ENCODE measurements at regions of chr6 and their contacts with region 1.

Region 1: DNA sequence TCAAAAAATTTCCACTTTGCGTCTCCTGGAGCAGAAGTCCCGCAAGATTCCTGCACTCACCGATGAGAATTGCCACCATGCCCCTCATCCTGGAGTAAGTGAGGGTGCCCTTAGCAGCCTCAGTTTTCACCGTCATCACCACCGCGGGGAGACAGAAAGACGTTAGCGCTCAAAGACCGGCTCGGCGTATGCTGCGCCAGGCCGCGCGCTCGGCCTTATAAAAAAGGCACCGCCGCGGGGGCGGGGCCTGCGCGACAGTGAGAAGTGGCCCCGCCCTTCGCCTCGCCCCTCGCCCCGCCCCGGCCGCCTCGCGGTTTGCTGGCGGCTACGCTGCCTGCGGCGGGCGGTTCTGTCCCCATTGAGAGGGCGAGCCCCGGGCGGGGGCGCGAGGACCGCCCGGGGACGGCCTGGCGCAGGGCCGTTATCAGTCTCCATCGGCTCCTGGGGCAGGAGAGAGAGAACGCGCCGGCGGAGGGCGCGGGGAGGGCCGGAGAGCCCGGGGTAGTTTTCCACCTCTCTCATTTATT is 122.3 kb upstream of the SLC2A12 start:
- DNase-seq: peak; percentile 87 to 97 (median 93)
- ATAC-seq: peak; percentile 89
- H3K4me3 ChIP-seq: peak overlapping the region; percentile 71
- H3K4me3 Mint-ChIP-seq: peak overlapping the region; percentile 86 to 100 (median 98)
- H3K27ac ChIP-seq: peak overlapping the region; percentile 88
- H3K27ac Mint-ChIP-seq: peak overlapping the region; percentile 89 to 99 (median 97)
- H3K4me1 ChIP-seq: peaks cover 11 to 52% of the 10 kb centered on the region in 2 donors
- H3K4me1 Mint-ChIP-seq: peaks cover 48 to 78% (median 75%) of the 10 kb centered on the region in 7 donors
- H3K27me3 ChIP-seq: no peaks in the 10 kb centered on the region
- H3K27me3 Mint-ChIP-seq: no peaks in the 10 kb centered on the region

Region 2: GRCh38 chr6:134123666-134124208 is 51.0 kb before region 1 on chr6:
- CTCF ChIA-PET with region 1: no interaction called
- POLR2A ChIA-PET with region 1: no interaction called
- intact Hi-C with region 1: loop called in 1 of 2 experiments (anchors 1 kb)
- DNase-seq: peak in 7 of 9 donors; percentile 7 to 75 (median 50)
- ATAC-seq: peak; percentile 99
- H3K4me3 ChIP-seq: no peak overlapping the region
- H3K4me3 Mint-ChIP-seq: peak overlapping the region in 4 of 10 donors; percentile 39 to 53 (median 51)
- H3K27ac ChIP-seq: no peak overlapping the region
- H3K27ac Mint-ChIP-seq: peak overlapping the region in 4 of 9 donors; percentile 22 to 70 (median 68)
- H3K4me1 ChIP-seq: no peaks in the 10 kb centered on the region
- H3K4me1 Mint-ChIP-seq: peaks cover 0 to 4% (median 0%) of the 10 kb centered on the region in 7 donors
- H3K27me3 ChIP-seq: no peaks in the 10 kb centered on the region
- H3K27me3 Mint-ChIP-seq: peaks cover 0 to 4% (median 0%) of the 10 kb centered on the region in 5 donors

Region 3: GRCh38 chr6:134185277-134185676 is 10.5 kb after region 1 on chr6:
- CTCF ChIA-PET with region 1: no interaction called
- POLR2A ChIA-PET with region 1: no interaction called
- intact Hi-C with region 1: no loop called
- DNase-seq: no peak
- ATAC-seq: no peak
- H3K4me3 ChIP-seq: no peak overlapping the region
- H3K4me3 Mint-ChIP-seq: no peak overlapping the region
- H3K27ac ChIP-seq: no peak overlapping the region
- H3K27ac Mint-ChIP-seq: peak overlapping the region in 1 of 9 donors; percentile 9
- H3K4me1 ChIP-seq: peaks cover 0 to 9% of the 10 kb centered on the region in 2 donors
- H3K4me1 Mint-ChIP-seq: peaks cover 0 to 32% (median 18%) of the 10 kb centered on the region in 7 donors
- H3K27me3 ChIP-seq: no peaks in the 10 kb centered on the region
- H3K27me3 Mint-ChIP-seq: no peaks in the 10 kb centered on the region

Region 4: GRCh38 chr6:134352786-134353480 is 178.2 kb after region 1 on chr6:
- CTCF ChIA-PET with region 1: interaction called, 13 read pairs
- POLR2A ChIA-PET with region 1: interaction called, 3 read pairs
- intact Hi-C with region 1: no loop called
- DNase-seq: no peak
- ATAC-seq: no peak
- H3K4me3 ChIP-seq: no peak overlapping the region
- H3K4me3 Mint-ChIP-seq: peak overlapping the region in 7 of 10 donors; percentile 13 to 93 (median 83)
- H3K27ac ChIP-seq: no peak overlapping the region
- H3K27ac Mint-ChIP-seq: peak overlapping the region; percentile 21 to 98 (median 96)
- H3K4me1 ChIP-seq: peaks cover 0 to 18% of the 10 kb centered on the region in 2 donors
- H3K4me1 Mint-ChIP-seq: peaks cover 8 to 34% (median 28%) of the 10 kb centered on the region in 7 donors
- H3K27me3 ChIP-seq: no peaks in the 10 kb centered on the region
- H3K27me3 Mint-ChIP-seq: no peaks in the 10 kb centered on the region

Region 5: GRCh38 chr6:134517145-134517658 is 342.5 kb after region 1 on chr6:
- CTCF ChIA-PET with region 1: no interaction called
- POLR2A ChIA-PET with region 1: interaction called, 3 read pairs
- intact Hi-C with region 1: loop called (anchors 1 kb)
- DNase-seq: peak in 1 of 9 donors; percentile 20
- ATAC-seq: no peak
- H3K4me3 ChIP-seq: no peak overlapping the region
- H3K4me3 Mint-ChIP-seq: peak overlapping the region in 2 of 10 donors; percentile 1 to 9
- H3K27ac ChIP-seq: no peak overlapping the region
- H3K27ac Mint-ChIP-seq: peak overlapping the region in 7 of 9 donors; percentile 3 to 95 (median 66)
- H3K4me1 ChIP-seq: peaks cover 0 to 24% of the 10 kb centered on the region in 2 donors
- H3K4me1 Mint-ChIP-seq: peaks cover 12 to 48% (median 34%) of the 10 kb centered on the region in 7 donors
- H3K27me3 ChIP-seq: no peaks in the 10 kb centered on the region
- H3K27me3 Mint-ChIP-seq: no peaks in the 10 kb centered on the region

Region 6: DNA sequence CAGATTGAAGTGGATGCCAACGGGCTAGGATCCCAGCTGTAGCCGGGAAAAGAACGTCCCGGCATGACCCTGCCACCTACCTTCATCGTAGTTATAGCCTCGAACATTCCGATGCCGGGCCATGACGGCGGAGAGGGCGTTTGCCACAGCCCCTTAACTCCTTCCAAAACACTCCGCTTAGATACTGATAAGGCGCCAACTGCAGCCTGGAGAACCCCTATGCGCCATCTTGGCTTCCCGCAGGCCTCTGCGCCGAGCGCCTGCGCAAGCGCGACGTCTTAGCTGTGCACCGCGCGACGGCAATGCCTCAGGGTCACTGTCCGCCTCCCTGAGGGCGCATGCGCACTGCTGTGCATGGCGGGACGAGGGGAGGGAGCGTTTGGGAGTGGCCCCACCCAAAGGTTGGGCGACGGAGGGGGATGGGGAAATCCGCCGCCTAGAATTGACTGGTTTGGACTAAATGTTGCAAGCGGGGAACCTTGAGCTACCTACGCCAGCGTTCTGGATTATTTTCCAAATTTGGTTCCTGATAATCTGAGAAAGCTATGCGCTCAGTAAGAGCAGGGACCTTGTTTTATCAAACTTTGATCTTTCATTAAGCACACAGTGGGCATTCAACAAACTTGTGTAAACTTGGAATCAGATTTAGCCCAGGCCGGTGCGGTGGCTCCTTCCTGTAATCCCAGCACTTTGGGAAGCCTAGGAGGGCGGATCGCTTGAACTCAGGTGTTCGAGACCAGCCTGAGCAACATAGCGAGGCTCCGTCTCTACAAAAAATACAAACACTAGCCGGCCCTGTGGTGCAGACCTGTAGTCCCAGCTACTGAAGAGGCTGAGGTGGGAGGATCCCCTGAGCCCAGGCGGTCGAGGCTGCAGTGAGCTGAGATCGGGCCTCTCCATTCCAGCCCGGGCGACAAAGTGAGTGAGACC is 880.1 kb after region 1 on chr6 and contains the start of gene HBS1L:
- CTCF ChIA-PET with region 1: no interaction called
- POLR2A ChIA-PET with region 1: no interaction called
- intact Hi-C with region 1: loop called (anchors 1 kb)
- DNase-seq: peak; percentile 93 to 98 (median 96)
- ATAC-seq: peak; percentile 97
- H3K4me3 ChIP-seq: peak within 1 kb of the TSS; percentile 96
- H3K4me3 Mint-ChIP-seq: peak within 1 kb of the TSS; percentile 89 to 100 (median 97)
- H3K27ac ChIP-seq: peak within 1 kb of the TSS; percentile 97
- H3K27ac Mint-ChIP-seq: peak within 1 kb of the TSS; percentile 97 to 100 (median 98)
- H3K4me1 ChIP-seq: peaks cover 10 to 13% of the 10 kb centered on the region in 2 donors
- H3K4me1 Mint-ChIP-seq: peaks cover 21 to 51% (median 46%) of the 10 kb centered on the region in 7 donors
- H3K27me3 ChIP-seq: no peaks in the 10 kb centered on the region
- H3K27me3 Mint-ChIP-seq: peaks cover 0 to 3% (median 0%) of the 10 kb centered on the region in 5 donors
- total RNA-seq, gene HBS1L: 70.0 to 112 (median 83.1) TPM

Region 7: DNA sequence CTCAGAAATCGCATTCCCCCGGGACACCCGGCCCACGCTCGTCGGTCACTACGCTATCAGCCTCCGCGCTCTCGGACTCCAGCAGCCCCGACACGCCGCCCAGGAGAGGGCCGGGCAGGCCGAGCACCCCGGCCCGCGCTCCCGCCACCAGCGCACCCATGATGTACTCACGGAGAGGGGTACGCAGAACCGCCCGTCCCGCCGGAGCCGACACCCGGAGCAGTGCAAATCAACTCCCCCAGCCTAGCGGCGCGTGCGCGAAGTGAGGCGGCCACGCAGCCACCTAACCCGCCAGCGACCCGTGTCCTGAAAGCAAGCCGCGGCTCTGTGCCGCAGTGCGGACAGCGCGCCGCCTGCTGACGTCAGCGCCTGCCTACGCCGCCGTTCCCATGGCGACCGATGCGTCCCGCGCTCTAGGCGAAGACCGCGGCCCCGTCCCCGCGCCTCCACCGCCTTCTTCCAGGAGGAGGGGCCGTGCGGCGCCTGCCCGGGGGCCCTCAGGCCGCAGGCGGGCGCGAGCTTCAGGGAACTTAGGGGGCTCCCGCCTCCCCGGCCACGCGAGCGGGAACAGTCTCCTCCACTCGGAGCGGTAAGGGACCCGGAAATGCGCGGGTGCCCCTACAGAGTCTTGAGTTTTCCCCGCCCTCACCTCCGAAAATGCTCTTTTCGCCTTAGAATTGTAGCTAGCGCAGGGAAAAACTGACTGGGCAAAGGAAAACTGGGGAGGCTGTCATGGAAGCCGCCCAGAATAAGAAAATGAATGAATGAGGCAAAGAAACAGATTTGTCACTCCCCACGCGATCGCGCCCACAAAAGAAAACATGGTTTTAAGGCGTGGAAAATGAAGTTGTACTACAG is 1322.9 kb after region 1 on chr6 and contains the start of gene AHI1:
- CTCF ChIA-PET with region 1: no interaction called
- POLR2A ChIA-PET with region 1: no interaction called
- intact Hi-C with region 1: loop called in 1 of 2 experiments (anchors 5 kb)
- DNase-seq: peak; percentile 65 to 94 (median 85)
- ATAC-seq: peak; percentile 89
- H3K4me3 ChIP-seq: peak within 1 kb of the TSS; percentile 64
- H3K4me3 Mint-ChIP-seq: peak within 1 kb of the TSS in 4 of 10 donors; percentile 32 to 53 (median 37)
- H3K27ac ChIP-seq: peak within 1 kb of the TSS; percentile 95
- H3K27ac Mint-ChIP-seq: no peak within 1 kb of the TSS
- H3K4me1 ChIP-seq: peaks cover 0 to 5% of the 10 kb centered on the region in 2 donors
- H3K4me1 Mint-ChIP-seq: peaks cover 4 to 19% (median 9%) of the 10 kb centered on the region in 7 donors
- H3K27me3 ChIP-seq: no peaks in the 10 kb centered on the region
- H3K27me3 Mint-ChIP-seq: peaks cover 0 to 3% (median 0%) of the 10 kb centered on the region in 5 donors
- total RNA-seq, gene AHI1: 12.5 to 31.3 (median 26.3) TPM

Region 8: GRCh38 chr6:135941275-135942025 is 1766.7 kb after region 1 on chr6:
- CTCF ChIA-PET with region 1: no interaction called
- POLR2A ChIA-PET with region 1: no interaction called
- intact Hi-C with region 1: no loop called
- DNase-seq: no peak
- ATAC-seq: no peak
- H3K4me3 ChIP-seq: no peak overlapping the region
- H3K4me3 Mint-ChIP-seq: no peak overlapping the region
- H3K27ac ChIP-seq: no peak overlapping the region
- H3K27ac Mint-ChIP-seq: no peak overlapping the region
- H3K4me1 ChIP-seq: no peaks in the 10 kb centered on the region
- H3K4me1 Mint-ChIP-seq: no peaks in the 10 kb centered on the region
- H3K27me3 ChIP-seq: no peaks in the 10 kb centered on the region
- H3K27me3 Mint-ChIP-seq: no peaks in the 10 kb centered on the region